RWPE1 (cell line): ENCODE measurements at regions of chr22 and their contacts with region 1.

Region 1: GRCh38 chr22:39528681-39529486 is 3.7 kb downstream of the RPS19BP1 start:
- DNase-seq: peak; percentile 67
- H3K27ac ChIP-seq: peak overlapping the region; percentile 98
- CTCF ChIP-seq: peak; percentile 97

Region 2: GRCh38 chr22:39493231-39493673 is 35.6 kb before region 1 on chr22:
- CTCF ChIA-PET with region 1: interaction called, 11 read pairs
- POLR2A ChIA-PET with region 1: no interaction called
- DNase-seq: no peak
- H3K27ac ChIP-seq: no peak overlapping the region
- CTCF ChIP-seq: peak; percentile 48